Activated B cell treated with CpG ODN at 0.5 μM for 24 hours (primary cell): ENCODE measurements at regions of chr13 and their contacts with region 1.

Region 1: DNA sequence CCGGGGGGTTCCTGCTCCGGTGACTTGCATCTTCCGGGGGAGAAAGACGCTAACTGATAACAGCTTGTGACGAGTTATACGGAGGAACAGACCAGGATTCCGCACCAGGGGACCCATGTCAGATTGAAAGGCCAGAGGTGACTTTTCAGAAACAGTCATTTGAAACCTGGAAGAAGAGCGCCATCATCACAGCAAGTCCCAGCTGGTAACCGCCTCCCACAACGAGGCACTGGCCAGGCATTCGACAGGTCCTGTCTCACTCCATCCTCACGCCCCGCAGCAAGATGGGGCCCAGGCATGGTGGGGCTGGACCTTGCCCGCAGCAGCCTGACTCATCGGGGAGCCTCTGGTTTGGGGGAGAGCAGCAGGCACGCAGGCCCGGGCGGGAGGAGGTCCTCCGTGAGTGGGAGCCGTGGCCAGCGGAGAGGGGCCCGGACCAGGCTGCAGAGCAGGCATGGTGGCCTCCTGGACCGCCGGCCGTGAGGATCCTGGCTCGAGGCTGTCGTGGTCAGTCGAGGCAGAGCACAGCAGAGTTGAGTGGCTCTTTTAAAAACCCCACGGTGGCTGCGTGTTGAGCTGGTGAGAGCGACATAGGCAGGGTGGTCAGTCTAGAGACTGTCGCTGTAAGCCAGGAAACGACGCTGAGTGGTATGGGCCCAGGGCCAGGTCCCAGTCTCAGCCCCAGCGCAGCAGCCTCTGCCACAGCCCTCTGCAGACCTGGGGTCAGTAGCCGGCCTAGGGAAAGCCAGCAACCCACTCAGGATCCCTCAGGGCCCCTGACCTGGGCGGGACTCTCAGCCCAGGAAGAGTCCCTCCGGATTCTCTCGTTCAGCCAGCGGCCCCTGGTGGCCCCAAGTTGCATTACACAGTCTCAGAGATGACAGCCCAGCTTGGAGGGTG is 94.9 kb upstream of the MCF2L start:
- DNase-seq: peak; percentile 83
- ATAC-seq: peak; percentile 86
- H3K4me3 Mint-ChIP-seq: peak overlapping the region; percentile 79
- H3K27ac Mint-ChIP-seq: peak overlapping the region; percentile 95
- H3K4me1 Mint-ChIP-seq: peaks cover 36% of the 10 kb centered on the region
- H3K27me3 Mint-ChIP-seq: no peaks in the 10 kb centered on the region
- CTCF ChIP-seq: peak; percentile 55

Region 2: DNA sequence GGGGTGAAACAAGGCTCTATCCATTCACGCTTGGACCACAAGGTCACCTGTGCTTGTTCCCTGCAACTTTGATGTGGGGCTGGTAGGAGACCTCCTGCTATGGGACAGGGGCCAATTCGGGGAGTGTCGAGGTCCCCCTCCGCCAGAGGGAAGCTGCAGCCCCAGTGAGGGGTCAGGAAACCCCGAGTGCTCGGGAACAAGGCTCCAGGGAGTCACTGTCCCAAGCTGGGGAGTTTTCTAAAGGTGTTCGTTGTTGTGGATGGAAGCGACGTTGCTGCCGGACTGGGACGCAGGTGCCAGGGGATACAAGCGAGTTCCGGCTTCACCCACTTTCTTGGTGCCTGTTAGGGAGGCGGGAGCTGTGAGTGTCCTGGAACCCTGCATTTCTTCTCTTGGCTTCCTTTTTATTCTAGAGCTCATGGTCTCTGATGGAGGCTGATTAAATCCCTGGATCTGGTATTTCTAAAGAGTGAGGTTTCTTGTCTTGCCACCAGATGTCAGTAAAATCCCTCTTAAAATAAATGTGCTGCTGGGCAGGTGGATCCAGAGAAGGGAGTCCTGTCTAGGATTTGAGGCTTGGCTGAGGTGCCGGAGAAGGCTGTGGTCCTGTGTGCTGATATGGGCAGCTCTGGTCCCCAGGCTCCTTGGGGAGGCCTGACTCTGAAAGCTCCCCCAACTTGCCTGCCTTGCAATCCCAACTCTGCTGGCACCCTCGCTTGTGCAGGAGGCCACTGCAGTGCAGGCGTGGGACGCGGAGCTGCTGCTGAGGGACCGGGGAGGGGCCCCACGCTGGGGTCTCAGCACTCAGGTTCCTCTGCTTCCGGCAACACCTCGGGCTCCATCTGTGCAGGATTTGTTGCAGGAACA is 1399.7 kb before region 1 on chr13:
- CTCF ChIA-PET with region 1: no interaction called
- POLR2A ChIA-PET with region 1: no interaction called
- intact Hi-C with region 1: loop called (anchors 5 kb)
- DNase-seq: no peak
- ATAC-seq: no peak
- H3K4me3 Mint-ChIP-seq: no peak overlapping the region
- H3K27ac Mint-ChIP-seq: no peak overlapping the region
- H3K4me1 Mint-ChIP-seq: no peaks in the 10 kb centered on the region
- H3K27me3 Mint-ChIP-seq: no peaks in the 10 kb centered on the region
- CTCF ChIP-seq: no peak

Region 3: DNA sequence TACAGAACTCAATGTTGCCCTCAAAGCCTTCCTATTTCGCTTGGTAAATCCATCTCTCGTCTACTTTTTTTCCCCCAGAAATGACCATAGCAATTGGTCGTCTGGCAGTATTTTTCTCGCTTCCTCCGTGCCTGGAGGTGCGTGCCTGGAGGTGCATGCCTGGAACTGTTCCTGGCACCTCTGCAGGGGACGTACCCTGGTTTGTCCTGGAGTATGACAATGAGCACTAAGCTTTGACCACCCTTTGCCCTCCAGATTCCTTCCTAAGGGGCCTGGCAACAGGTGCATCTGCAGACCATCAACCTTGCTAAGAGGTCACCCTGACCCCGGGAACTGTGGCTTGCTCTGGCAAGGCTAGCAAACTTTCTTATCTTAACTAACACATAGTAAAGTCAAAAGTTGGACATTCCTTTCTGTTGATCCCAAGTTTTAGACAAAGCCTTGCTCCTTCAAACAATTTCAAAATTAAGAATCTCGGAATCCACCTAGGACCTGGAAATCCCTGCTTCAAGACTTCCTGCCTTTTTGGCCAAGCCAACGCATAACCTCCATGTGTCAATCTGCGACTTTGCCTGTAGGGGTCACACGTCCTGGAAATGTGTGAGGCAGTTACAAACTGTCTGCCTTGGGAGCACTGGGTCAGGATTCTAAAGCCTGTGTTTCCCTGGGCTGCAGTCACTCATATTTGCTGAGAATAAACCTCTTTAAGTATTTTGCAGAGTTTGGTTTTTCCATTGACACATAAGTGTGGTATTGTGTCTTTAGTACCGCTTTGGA is 257.3 kb before region 1 on chr13:
- CTCF ChIA-PET with region 1: interaction called, 5 read pairs
- POLR2A ChIA-PET with region 1: no interaction called
- intact Hi-C with region 1: loop called (anchors 1 kb)
- DNase-seq: no peak
- ATAC-seq: no peak
- H3K4me3 Mint-ChIP-seq: no peak overlapping the region
- H3K27ac Mint-ChIP-seq: no peak overlapping the region
- H3K4me1 Mint-ChIP-seq: peaks cover 8% of the 10 kb centered on the region
- H3K27me3 Mint-ChIP-seq: peaks cover 11% of the 10 kb centered on the region
- CTCF ChIP-seq: no peak

Region 4: DNA sequence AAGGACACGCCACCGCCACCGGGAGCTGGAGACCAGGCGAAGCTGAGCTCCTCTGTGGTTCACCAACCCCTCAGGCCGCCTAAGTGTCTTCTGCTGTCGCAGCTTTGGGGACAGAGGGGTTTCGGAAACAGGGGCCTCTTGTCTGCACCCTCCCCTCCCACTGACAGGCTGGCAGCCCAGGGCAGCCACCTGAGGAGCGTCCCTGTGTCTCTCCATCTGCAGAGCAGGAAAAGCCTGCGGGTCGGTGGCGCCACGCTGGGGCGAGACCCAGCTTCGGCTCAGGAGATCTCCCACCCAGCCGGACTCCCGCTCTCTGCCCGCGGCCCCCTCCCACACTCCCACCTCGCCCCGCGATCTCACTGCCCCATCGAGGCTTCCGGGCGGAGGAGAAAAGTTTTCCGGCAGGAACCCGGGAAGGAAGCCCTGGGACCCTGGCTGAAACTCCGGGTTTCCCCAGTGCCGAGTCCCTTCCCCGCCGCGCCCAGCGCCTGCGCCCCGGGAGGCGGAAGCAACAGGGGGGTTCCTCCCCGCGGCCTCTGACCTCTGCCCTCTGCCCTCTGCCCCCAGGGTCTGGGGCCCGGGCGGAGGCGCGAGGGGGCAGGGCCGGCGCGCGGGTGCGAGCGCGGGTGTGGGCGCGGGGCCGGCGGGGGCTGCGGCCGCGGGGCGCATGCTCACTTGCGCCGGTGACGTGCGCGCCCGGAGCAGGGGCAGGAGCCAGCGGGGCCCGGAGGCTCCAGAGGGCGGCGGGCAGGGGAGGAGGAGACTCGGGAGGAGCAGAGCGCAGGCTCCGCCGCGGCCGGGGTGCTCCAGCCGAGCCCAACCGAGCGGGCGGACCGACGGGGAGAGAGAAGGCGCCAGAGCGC is 184.6 kb before region 1 on chr13 and contains the start of gene ATP11A:
- CTCF ChIA-PET with region 1: no interaction called
- POLR2A ChIA-PET with region 1: interaction called, 8 read pairs
- intact Hi-C with region 1: loop called (anchors 2 kb)
- DNase-seq: peak; percentile 73
- ATAC-seq: peak; percentile 83
- H3K4me3 Mint-ChIP-seq: peak within 1 kb of the TSS; percentile 87
- H3K27ac Mint-ChIP-seq: peak within 1 kb of the TSS; percentile 84
- H3K4me1 Mint-ChIP-seq: peaks cover 42% of the 10 kb centered on the region
- H3K27me3 Mint-ChIP-seq: peaks cover 1% of the 10 kb centered on the region
- CTCF ChIP-seq: no peak
- total RNA-seq, gene ATP11A: 43.7 and 49.6 TPM in 2 replicates

Region 5: DNA sequence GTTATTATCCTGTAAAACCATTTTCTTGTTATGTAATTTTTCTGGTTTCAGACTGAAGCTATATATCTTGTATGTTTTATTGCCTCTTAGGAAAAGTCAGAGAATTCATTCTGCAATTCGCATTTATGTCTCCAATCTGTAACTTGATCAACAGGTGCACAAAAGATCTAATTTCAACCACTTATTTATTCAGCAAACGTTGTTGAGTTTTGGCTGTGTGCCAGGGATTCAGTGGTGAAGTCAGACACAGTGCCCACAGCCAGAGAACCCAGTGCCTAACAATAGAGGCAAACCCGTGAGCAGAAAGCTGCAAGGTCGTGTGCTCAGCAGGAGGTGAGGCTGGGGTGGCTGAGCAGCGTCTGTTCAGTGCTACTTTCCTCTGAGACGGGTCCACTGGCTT is 24.6 kb before region 1 on chr13:
- CTCF ChIA-PET with region 1: no interaction called
- POLR2A ChIA-PET with region 1: no interaction called
- intact Hi-C with region 1: no loop called
- DNase-seq: no peak
- ATAC-seq: no peak
- H3K4me3 Mint-ChIP-seq: no peak overlapping the region
- H3K27ac Mint-ChIP-seq: no peak overlapping the region
- H3K4me1 Mint-ChIP-seq: no peaks in the 10 kb centered on the region
- H3K27me3 Mint-ChIP-seq: no peaks in the 10 kb centered on the region
- CTCF ChIP-seq: no peak

Region 6: DNA sequence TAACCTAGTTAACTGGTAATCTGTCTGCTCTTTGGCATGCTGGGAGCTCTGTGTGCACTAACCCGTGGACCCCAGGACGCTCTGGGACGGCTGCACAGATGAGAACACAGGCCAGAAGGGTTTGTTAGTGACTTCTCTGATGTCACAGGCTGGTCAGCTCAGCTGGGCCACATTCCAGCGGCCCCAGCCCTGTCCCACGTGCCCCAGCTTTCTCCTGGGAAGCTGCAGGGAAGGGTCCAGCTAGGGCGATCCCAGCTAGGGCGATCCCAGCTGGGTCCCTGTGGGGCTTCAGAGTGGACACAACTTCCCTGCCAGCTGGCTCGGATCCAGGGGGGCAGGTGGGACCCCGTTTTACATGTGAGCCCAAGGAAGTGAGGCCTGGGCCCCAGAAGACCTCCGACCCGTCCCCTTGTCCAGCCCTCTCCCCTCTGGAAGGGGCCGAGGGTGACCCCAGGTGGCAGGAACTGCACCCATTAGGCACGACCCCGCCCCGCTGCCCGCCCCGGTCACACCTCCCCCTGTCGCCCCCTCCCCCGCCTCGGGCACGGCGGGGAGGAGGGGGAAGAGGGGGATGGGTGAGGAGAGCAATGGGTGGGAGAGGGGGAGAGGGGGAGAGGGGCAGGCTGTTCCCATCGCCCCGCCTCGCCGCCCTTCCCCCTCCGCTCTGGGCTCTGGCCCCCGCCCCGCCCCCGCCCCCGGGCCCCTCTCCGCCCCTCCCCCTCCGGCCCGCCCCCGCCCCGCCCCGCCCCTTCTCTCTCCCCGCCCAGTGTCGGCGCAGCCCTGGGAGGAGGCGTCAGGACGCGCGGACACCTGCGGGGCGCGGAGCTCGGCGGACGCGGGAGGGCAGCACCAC is 19.7 kb after region 1 on chr13:
- CTCF ChIA-PET with region 1: interaction called, 10 read pairs
- POLR2A ChIA-PET with region 1: no interaction called
- intact Hi-C with region 1: loop called (anchors 1 kb)
- DNase-seq: no peak
- ATAC-seq: peak; percentile 80
- H3K4me3 Mint-ChIP-seq: peak overlapping the region; percentile 59
- H3K27ac Mint-ChIP-seq: no peak overlapping the region
- H3K4me1 Mint-ChIP-seq: peaks cover 22% of the 10 kb centered on the region
- H3K27me3 Mint-ChIP-seq: peaks cover 3% of the 10 kb centered on the region
- CTCF ChIP-seq: no peak

Region 7: DNA sequence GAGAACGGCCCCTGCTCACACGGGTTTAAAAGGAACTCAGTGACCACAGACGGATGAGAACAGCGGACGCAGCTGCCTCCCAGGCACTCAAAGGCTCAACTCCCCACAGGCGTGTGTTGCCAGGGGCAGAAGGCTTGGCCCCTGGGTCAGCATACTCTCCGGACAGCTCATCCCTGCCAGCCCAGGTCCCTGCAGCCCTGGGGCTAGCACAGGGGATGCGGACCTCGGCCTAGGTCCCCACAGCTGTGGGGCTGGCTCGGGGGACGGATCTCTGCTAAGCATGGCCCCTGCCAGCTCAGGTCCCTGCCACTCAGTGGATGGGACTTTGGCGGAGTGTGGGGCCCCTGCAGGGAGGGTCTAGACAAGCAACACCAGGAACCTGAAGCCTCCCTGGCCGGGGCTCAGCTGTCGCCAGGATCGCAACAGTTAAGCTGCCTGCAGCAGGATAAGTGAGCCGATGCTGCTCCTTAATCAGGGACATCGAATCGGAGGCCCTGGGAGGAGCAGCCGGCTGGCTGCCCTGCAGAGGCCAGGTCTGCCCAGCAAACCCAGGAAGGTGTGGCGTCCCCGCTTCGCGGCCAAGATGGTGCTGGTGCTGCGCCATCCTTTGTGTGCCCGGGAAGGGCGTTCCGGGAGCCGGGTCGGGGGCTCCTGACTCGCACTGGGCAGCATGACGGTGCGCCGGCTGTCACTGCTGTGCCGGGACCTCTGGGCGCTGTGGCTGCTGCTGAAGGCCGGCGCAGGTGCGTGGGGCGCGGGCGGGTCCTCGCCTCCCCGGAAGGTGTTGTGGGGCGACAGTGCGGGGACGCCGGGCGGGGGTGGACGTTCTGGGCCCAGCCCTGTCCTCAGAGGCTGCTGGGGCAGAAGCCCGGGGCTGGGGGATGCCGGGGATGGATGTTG is 127.4 kb after region 1 on chr13:
- CTCF ChIA-PET with region 1: no interaction called
- POLR2A ChIA-PET with region 1: no interaction called
- intact Hi-C with region 1: no loop called
- DNase-seq: no peak
- ATAC-seq: no peak
- H3K4me3 Mint-ChIP-seq: no peak overlapping the region
- H3K27ac Mint-ChIP-seq: no peak overlapping the region
- H3K4me1 Mint-ChIP-seq: peaks cover 7% of the 10 kb centered on the region
- H3K27me3 Mint-ChIP-seq: peaks cover 15% of the 10 kb centered on the region
- CTCF ChIP-seq: no peak